PC-9 (cell line): ENCODE measurements at regions of chr11 and their contacts with region 1.

Region 1: GRCh38 chr11:363948-364761 is 5.1 kb upstream of the B4GALNT4 start:
- DNase-seq: peak; percentile 76 to 85
- H3K4me3 ChIP-seq: no peak overlapping the region; the same call in 1 of the 2 replicates
- H3K27ac ChIP-seq: no peak overlapping the region
- H3K4me1 ChIP-seq: peaks cover 8% of the 10 kb centered on the region; the same call in 1 of the 2 replicates
- H3K27me3 ChIP-seq: peaks cover 15% of the 10 kb centered on the region
- CTCF ChIP-seq: peak; percentile 78

Region 2: DNA sequence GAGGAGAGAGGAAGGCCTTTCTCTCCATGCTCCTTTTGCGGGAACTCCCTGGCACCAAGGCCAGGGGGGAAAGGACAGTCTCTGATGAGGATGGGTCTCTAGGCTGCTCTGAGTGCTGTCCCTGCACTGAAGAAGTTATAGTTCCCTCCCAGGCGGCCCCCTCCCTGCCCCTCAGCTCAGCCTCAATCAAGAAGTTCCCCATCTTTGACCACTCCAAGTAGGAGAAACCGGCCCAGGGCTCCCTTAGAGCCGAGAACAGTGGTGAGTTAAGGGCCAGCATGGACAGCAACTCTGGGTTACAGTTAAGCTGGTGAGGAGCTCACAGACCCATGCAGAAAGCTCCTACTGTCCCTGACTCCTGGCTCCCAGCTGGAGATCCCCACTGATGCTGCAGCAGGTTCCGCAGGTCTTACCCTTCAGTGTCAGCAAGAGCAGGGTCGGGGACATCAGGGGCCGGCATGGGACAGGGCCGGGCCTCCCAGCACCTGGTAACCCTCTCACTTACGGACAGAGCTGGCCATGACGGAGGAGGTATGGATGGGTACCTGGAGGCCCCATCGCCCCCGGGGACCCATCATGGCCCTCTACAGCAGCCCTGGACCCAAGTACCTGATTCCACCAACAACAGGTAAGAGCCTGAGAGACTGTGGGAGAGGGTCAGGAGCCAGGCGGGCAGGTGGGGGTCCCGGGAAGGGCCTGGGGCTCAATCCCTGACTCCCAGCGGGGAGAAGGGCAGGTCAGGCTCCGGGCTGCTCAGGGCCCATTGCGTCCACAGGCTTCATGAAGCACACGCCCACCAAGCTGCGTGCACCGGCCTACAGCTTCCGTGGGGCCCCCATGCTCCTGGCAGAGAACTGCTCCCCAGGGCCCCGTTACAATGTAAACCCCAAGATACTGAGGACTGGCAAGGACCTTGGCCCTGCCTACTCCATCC is 167.1 kb before region 1 on chr11:
- CTCF ChIA-PET with region 1: interaction called, 15 read pairs
- POLR2A ChIA-PET with region 1: no interaction called
- intact Hi-C with region 1: no loop called
- DNase-seq: no peak
- H3K4me3 ChIP-seq: no peak overlapping the region
- H3K27ac ChIP-seq: no peak overlapping the region
- H3K4me1 ChIP-seq: no peaks in the 10 kb centered on the region
- H3K27me3 ChIP-seq: peaks cover 3% of the 10 kb centered on the region; the same call in 1 of the 2 replicates
- CTCF ChIP-seq: no peak

Region 3: DNA sequence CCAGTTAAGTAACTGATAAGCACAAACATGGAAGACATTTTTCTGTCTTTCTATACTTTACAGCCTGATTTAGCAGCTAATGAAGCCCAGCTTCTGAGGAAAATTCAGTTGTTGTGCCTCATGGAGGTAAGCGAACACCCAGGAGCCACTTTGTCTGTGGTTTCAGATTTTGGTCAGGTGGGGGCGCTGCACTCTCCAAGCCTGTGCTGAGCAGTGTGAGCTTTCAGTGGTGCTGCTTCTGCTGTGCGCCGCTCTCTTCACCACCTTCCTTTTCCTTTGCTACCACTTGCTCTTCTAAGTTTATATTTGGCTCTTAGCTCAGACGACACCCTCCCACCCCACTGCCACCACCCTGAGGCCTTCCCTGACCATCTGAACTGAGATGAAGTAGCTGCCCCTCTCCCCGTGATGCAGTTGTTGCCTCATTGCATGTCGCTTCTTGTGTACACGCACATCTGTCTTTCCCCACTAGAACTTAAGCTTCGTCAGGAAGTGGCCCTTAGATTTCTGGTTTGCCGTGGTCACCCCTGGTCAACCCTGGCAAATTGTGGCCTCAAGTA is 113.3 kb before region 1 on chr11:
- CTCF ChIA-PET with region 1: interaction called, 4 read pairs
- POLR2A ChIA-PET with region 1: interaction called, 15 read pairs
- intact Hi-C with region 1: no loop called
- DNase-seq: peak in 1 of 2 experiments; percentile 51
- H3K4me3 ChIP-seq: no peak overlapping the region
- H3K27ac ChIP-seq: no peak overlapping the region
- H3K4me1 ChIP-seq: no peaks in the 10 kb centered on the region
- H3K27me3 ChIP-seq: no peaks in the 10 kb centered on the region
- CTCF ChIP-seq: peak; percentile 67